ENCODE measurements at regions of chr5 and their contacts with region 1.

Region 1: GRCh38 chr5:140351609-140352334 is 5.4 kb upstream of the HBEGF start:
- DNase-seq: peak; percentile 67
- ATAC-seq: peak; percentile 87
- H3K4me3 Mint-ChIP-seq: no peak overlapping the region
- H3K27ac Mint-ChIP-seq: no peak overlapping the region
- H3K4me1 Mint-ChIP-seq: peaks cover 6% of the 10 kb centered on the region
- H3K27me3 Mint-ChIP-seq: peaks cover 7% of the 10 kb centered on the region
- CTCF ChIP-seq: peak; percentile 89

Region 2: DNA sequence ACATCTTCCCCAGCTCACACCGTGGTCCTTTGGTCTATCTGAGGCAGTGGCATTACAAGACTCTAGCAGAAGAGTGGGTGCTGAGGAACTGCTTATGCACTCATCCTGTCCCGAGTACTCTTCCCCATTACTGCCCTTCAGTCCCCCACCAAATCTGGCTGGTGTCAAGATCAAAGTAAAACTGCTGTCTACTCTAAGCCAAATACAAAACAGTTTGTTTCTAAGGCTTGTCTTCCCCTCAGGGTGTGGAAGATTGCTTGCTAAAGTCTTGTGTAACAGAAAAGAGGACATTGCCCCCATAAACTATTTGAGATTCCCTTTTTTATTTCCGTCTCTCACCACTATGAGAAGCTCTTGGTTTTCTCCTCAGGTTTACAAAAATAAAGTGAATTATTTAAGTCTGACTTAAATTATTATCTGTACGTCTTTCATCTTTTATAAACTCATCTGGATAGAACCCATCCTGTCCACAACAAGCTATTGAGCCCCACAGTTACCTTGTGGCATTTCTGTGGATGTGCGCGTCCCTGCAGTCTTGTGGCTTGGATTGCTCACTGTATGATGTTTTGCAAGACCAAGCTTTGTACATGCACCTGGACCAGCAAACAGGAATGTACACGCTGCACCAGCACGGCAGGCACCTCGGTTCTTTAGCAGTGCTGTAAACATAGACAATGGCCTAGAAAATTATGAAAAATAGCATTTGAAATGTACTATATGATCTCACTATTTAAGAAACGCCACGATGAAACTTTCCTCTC is 115.8 kb before region 1 on chr5:
- CTCF ChIA-PET with region 1: interaction called, 874 read pairs
- POLR2A ChIA-PET with region 1: interaction called, 3 read pairs
- intact Hi-C with region 1: loop called (anchors 1 kb)
- DNase-seq: no peak
- ATAC-seq: no peak
- H3K4me3 Mint-ChIP-seq: no peak overlapping the region
- H3K27ac Mint-ChIP-seq: no peak overlapping the region
- H3K4me1 Mint-ChIP-seq: no peaks in the 10 kb centered on the region
- H3K27me3 Mint-ChIP-seq: peaks cover 2% of the 10 kb centered on the region
- CTCF ChIP-seq: no peak

Region 3: GRCh38 chr5:140267559-140268018 is 84.2 kb before region 1 on chr5:
- CTCF ChIA-PET with region 1: interaction called, 874 read pairs
- POLR2A ChIA-PET with region 1: interaction called, 3 read pairs
- intact Hi-C with region 1: no loop called
- DNase-seq: no peak
- ATAC-seq: peak; percentile 18
- H3K4me3 Mint-ChIP-seq: no peak overlapping the region
- H3K27ac Mint-ChIP-seq: peak overlapping the region; percentile 39
- H3K4me1 Mint-ChIP-seq: peaks cover 36% of the 10 kb centered on the region
- H3K27me3 Mint-ChIP-seq: no peaks in the 10 kb centered on the region
- CTCF ChIP-seq: no peak

Region 4: GRCh38 chr5:140302786-140303639 is 48.8 kb before region 1 on chr5 and contains the start of gene PFDN1:
- CTCF ChIA-PET with region 1: interaction called, 16 read pairs
- POLR2A ChIA-PET with region 1: no interaction called
- intact Hi-C with region 1: loop called (anchors 5 kb)
- DNase-seq: peak; percentile 97
- ATAC-seq: peak; percentile 100
- H3K4me3 Mint-ChIP-seq: peak within 1 kb of the TSS; percentile 96
- H3K27ac Mint-ChIP-seq: peak within 1 kb of the TSS; percentile 95
- H3K4me1 Mint-ChIP-seq: peaks cover 16% of the 10 kb centered on the region
- H3K27me3 Mint-ChIP-seq: no peaks in the 10 kb centered on the region
- CTCF ChIP-seq: no peak
- total RNA-seq, gene PFDN1: 49.1 to 50.6 TPM

Region 5: DNA sequence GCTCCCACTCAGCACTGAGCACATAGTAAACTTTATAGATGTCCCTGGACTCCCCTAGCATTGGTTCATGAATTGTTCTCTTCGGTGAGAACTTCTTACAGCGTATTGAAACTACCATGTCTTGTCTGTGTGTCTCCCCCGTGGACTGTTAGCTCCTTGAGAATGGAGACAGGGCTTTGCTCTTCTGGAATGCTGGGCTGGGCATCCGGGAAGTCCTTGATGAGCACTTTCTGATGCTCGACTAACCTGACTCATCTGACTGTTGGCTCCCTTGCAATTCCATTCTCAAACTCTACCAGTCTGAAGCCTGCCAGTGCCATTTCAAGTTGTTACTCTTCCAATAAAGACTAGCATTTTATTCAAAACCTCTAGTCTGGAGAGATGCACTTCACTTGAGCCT is 33.9 kb before region 1 on chr5:
- CTCF ChIA-PET with region 1: interaction called, 17 read pairs
- POLR2A ChIA-PET with region 1: interaction called, 4 read pairs
- intact Hi-C with region 1: no loop called
- DNase-seq: no peak
- ATAC-seq: no peak
- H3K4me3 Mint-ChIP-seq: no peak overlapping the region
- H3K27ac Mint-ChIP-seq: no peak overlapping the region
- H3K4me1 Mint-ChIP-seq: no peaks in the 10 kb centered on the region
- H3K27me3 Mint-ChIP-seq: no peaks in the 10 kb centered on the region
- CTCF ChIP-seq: no peak

Region 6: DNA sequence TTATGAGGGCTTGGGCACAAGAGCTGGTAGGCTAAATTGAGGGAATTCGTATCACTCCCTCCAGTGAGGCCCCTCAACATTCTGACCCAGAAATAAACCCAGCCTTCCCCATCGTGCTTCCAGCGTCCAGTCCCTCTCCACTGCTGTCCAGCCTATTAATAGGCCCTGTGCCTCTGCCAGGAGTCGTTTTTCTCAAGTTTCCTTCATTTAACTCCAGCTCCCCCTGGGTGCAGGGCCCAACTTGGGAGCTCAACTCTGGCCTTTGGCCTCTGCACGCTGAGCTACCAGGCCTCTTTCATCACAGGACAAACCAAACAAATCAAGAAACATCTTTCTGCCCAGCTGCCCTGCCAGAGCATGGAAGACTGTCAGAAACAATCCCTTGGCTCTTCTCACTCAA is 15.4 kb before region 1 on chr5:
- CTCF ChIA-PET with region 1: interaction called, 48 read pairs
- POLR2A ChIA-PET with region 1: interaction called, 4 read pairs
- intact Hi-C with region 1: no loop called
- DNase-seq: no peak
- ATAC-seq: no peak
- H3K4me3 Mint-ChIP-seq: no peak overlapping the region
- H3K27ac Mint-ChIP-seq: no peak overlapping the region
- H3K4me1 Mint-ChIP-seq: peaks cover 8% of the 10 kb centered on the region
- H3K27me3 Mint-ChIP-seq: no peaks in the 10 kb centered on the region
- CTCF ChIP-seq: no peak

Region 7: GRCh38 chr5:140372971-140373487 is 21.3 kb after region 1 on chr5:
- CTCF ChIA-PET with region 1: interaction called, 43 read pairs
- POLR2A ChIA-PET with region 1: no interaction called
- intact Hi-C with region 1: no loop called
- DNase-seq: peak; percentile 57
- ATAC-seq: peak; percentile 86
- H3K4me3 Mint-ChIP-seq: no peak overlapping the region
- H3K27ac Mint-ChIP-seq: no peak overlapping the region
- H3K4me1 Mint-ChIP-seq: no peaks in the 10 kb centered on the region
- H3K27me3 Mint-ChIP-seq: no peaks in the 10 kb centered on the region
- CTCF ChIP-seq: peak; percentile 87